Heart left ventricle (tissue), 16 donors: ENCODE measurements at regions of chr13 and their contacts with region 1.

Region 1: DNA sequence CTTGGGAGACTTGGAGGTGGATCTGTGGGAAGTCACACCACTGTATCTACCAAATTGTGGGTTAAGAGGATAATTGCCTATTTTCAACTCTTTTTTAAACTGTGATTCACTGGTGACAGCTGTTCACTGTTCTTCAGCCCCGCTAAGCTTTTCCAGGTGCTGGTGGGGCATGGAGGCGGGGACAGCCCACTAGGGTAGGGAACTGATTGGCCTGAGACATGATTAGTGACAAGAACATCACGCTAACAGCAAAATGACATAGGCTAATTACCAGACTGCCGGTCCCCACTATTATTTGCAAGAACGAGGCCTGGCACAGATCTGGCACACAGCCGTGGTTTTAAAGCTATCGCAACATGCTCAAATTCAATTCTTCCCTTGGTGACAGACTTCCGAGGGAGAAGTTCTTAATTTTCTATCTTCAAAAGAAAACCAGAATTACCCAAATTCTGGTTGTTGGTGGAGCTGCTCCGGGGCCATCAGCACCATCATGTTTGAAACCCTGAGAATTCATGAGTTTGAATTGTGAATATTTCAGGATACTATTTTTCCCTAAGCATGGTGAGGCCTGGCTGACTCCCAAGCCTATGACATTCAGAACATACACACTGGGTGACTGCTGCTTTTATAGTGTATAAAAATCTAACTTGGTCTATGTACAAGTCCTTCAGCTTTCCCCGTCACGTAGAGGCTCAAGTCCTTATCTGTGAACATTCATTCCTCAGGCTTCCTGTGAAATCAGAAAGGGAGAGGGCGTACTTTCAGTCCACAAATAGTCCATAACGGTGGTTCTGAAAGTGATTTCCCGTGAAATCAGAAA is 17.9 kb downstream of the DOCK9 start:
- DNase-seq: no peak
- ATAC-seq: peak; percentile 49 to 80 (median 58)
- H3K4me3 ChIP-seq: no peak overlapping the region
- H3K27ac ChIP-seq: peak overlapping the region; percentile 32 to 80 (median 65)
- H3K4me1 ChIP-seq: peaks cover 21 to 71% (median 56%) of the 10 kb centered on the region in 12 donors
- H3K27me3 ChIP-seq: no peaks in the 10 kb centered on the region
- CTCF ChIP-seq: peak in 2 of 12 donors; percentile 12 to 17
- POLR2A ChIP-seq: no peak

Region 2: DNA sequence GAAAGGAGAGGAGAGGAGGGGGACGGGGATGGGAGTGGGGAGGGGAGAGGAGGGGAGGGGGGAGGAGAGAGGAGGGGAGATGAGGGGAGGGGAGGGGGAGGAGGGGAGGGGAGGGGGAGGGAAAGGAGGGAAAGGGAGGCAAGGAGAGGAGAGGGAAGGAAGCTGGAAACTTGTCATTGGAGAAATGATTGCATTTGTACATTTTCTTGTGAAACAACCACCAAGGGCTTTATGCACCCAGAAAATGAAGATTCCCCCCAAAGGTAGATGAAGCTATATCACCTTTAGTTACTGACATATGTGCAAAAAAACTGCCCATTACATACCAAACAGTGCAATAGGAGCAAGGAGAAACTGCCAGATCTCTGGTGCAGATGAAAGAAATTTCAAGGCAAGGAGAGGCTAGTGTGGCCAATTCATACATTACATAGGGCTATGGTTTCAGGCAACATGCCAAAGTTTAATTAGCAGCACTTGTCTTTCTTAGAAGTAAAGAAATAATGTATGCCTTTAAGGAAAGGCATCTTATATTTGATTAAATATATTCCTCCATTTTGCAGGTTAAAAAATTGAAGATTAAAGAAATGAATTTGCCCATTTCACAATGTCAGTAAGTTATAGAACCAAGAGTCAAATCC is 333.6 kb before region 1 on chr13:
- intact Hi-C with region 1: no loop called
- DNase-seq: no peak
- ATAC-seq: no peak
- H3K4me3 ChIP-seq: no peak overlapping the region
- H3K27ac ChIP-seq: no peak overlapping the region
- H3K4me1 ChIP-seq: peaks cover 0 to 8% (median 0%) of the 10 kb centered on the region in 12 donors
- H3K27me3 ChIP-seq: no peaks in the 10 kb centered on the region
- CTCF ChIP-seq: no peak
- POLR2A ChIP-seq: no peak

Region 3: GRCh38 chr13:98900442-98900841 is 59.6 kb before region 1 on chr13:
- intact Hi-C with region 1: loop called in 1 of 10 experiments (anchors 5 kb)
- DNase-seq: no peak
- ATAC-seq: no peak
- H3K4me3 ChIP-seq: no peak overlapping the region
- H3K27ac ChIP-seq: no peak overlapping the region
- H3K4me1 ChIP-seq: peaks cover 0 to 8% (median 0%) of the 10 kb centered on the region in 12 donors
- H3K27me3 ChIP-seq: no peaks in the 10 kb centered on the region
- CTCF ChIP-seq: no peak
- POLR2A ChIP-seq: no peak

Region 4: GRCh38 chr13:98910501-98910951 is 49.5 kb before region 1 on chr13:
- intact Hi-C with region 1: loop called in 2 of 10 experiments (anchors 5 to 10 kb)
- DNase-seq: peak in 3 of 5 donors; percentile 44 to 58 (median 53)
- ATAC-seq: peak; percentile 81 to 94 (median 84)
- H3K4me3 ChIP-seq: no peak overlapping the region
- H3K27ac ChIP-seq: peak overlapping the region; percentile 18 to 90 (median 66)
- H3K4me1 ChIP-seq: peaks cover 2 to 50% (median 27%) of the 10 kb centered on the region in 12 donors
- H3K27me3 ChIP-seq: no peaks in the 10 kb centered on the region
- CTCF ChIP-seq: no peak
- POLR2A ChIP-seq: no peak

Region 5: DNA sequence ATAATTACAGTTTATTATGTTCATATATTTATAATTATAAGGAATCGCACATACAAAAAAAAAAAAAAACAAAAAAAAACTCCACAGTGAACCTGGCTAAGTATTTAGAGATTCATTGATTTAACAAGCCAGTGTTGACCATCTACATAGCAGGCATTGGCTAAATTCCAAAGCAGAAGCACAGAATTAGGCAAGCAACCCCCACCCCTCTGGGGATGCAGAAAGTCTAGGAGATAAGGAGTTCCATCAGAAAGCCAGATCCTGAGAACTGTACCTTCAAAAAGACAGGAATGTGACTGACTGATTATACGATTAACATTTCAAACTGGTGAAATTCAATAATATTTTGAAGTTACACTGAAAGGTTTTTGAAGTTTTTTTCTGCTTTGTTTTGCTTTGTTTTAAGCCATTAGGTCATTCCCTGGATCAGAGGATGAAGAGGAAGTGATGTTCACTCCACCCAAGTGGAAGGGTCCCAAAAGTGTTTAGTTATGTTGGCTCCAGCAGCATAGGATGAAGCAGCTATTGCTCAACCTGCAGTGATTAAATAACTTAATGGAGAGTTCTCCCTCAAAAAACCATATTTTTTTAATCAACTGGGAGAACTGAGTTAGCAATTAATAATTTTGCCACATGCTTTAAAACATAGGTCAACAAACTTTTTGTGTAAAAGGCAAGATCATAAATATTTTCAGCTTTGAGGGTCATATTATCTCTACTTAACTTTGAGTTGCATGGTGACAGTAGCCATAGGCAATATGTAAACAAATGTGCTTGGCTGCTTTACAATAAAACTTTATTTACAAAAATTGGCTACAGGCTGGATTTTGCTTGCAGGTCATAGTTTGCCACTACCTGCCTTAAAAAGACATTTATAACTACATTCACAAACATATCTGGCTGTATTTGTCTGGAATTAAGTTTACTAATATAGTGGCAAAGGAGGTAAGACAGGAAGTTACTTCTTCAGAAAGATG is 31.8 kb before region 1 on chr13:
- intact Hi-C with region 1: loop called in 2 of 10 experiments (anchors 5 kb)
- DNase-seq: peak in 2 of 5 donors; percentile 60 to 68
- ATAC-seq: peak; percentile 84 to 95 (median 94)
- H3K4me3 ChIP-seq: no peak overlapping the region
- H3K27ac ChIP-seq: peak overlapping the region; percentile 14 to 81 (median 64)
- H3K4me1 ChIP-seq: peaks cover 0 to 51% (median 31%) of the 10 kb centered on the region in 12 donors
- H3K27me3 ChIP-seq: no peaks in the 10 kb centered on the region
- CTCF ChIP-seq: no peak
- POLR2A ChIP-seq: no peak

Region 6: DNA sequence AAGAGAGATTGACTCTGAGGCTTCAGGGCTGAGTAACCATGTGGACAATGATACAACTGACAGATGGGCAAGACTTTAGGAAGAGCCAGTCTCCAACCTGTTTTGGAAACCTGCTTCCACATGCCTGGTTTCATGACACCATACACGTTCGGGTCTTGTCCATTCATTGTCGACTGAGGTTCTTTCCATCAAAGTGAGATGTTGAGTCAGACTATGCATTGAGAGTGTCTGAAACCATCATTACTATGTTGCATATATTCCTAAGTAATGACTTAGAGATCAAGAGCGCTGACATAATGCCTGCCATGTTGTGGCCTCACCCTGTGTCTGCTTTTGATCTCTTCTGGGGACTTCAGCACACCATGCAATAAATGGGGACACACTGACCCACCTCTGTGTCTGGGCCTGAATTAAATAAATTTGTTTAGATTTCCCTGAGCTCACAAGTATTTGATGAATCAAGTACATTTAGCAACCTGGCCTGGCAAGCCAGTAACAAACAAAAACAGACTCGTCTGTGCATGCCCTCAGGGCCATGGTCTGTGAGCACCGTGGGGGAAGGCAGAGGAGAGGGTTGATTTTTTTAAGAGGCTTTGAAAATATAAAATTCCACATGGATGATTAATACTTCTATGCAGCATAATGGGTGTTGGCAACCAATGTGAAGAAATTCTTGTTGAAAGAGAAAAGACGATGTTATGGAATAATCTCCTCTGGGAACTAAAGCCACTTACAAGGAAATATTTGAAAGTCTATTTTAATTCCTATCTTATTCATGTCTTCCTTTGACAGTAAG is 190.8 kb after region 1 on chr13:
- intact Hi-C with region 1: no loop called
- DNase-seq: no peak
- ATAC-seq: no peak
- H3K4me3 ChIP-seq: no peak overlapping the region
- H3K27ac ChIP-seq: no peak overlapping the region
- H3K4me1 ChIP-seq: no peaks in the 10 kb centered on the region
- H3K27me3 ChIP-seq: peaks cover 0 to 97% (median 0%) of the 10 kb centered on the region in 9 donors
- CTCF ChIP-seq: no peak
- POLR2A ChIP-seq: no peak